HepG2 (cell line): ENCODE measurements at regions of chr6 and their contacts with region 1.

Region 1: DNA sequence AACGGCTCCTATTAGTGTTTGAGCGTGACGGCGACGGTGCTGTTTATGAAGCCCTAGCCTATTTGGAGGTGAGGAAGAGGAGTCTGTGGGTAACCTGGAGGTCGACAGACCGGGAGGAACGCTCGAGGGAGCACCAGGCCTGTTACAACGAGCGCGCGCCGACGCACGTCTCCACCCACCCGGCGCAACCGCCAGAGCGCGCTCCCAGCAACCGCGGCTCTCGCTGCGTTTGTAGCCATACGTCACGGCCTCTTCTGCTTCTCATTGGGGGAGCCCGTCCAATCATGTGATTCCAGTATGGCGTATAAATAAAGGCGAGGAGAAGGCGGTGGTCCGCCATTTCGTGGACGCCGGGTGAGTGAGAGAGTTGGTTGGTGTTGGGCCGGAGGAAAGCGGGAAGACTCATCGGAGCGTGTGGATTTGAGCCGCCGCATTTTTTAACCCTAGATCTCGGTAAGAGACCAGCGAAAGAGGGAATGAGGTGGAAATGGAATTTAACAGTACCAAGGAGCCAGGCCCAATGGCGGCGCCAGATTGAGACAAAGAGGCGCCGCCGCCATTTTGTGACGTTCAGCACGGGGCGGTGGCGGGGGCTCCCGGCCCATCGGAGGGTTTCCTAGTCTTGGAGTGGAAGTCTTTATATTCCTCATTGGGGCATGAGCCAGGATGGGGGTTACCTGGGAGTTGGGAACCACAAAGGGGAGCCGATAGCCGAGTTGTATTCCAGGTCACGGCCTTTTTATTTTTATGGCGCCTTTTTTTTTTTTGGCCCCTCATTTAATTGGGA is at the start of gene SRSF3:
- DNase-seq: peak; percentile 98
- ATAC-seq: peak; percentile 92
- H3K4me3 ChIP-seq: peak within 1 kb of the TSS; percentile 87 to 97 (median 92)
- H3K27ac ChIP-seq: peak within 1 kb of the TSS; percentile 93
- H3K4me1 ChIP-seq: peaks cover 50% of the 10 kb centered on the region
- H3K27me3 ChIP-seq: no peaks in the 10 kb centered on the region; a peak in 1 of 5 replicates
- CTCF ChIP-seq: peak; percentile 82
- EP300 ChIP-seq: peak in 1 of 2 experiments; percentile 56; a peak in 3 of 4 replicates
- POLR2A ChIP-seq: peak; percentile 100
- RAD21 ChIP-seq: peak; percentile 64
- total RNA-seq, gene SRSF3: 684 and 1,115 TPM in 2 replicates

Region 2: DNA sequence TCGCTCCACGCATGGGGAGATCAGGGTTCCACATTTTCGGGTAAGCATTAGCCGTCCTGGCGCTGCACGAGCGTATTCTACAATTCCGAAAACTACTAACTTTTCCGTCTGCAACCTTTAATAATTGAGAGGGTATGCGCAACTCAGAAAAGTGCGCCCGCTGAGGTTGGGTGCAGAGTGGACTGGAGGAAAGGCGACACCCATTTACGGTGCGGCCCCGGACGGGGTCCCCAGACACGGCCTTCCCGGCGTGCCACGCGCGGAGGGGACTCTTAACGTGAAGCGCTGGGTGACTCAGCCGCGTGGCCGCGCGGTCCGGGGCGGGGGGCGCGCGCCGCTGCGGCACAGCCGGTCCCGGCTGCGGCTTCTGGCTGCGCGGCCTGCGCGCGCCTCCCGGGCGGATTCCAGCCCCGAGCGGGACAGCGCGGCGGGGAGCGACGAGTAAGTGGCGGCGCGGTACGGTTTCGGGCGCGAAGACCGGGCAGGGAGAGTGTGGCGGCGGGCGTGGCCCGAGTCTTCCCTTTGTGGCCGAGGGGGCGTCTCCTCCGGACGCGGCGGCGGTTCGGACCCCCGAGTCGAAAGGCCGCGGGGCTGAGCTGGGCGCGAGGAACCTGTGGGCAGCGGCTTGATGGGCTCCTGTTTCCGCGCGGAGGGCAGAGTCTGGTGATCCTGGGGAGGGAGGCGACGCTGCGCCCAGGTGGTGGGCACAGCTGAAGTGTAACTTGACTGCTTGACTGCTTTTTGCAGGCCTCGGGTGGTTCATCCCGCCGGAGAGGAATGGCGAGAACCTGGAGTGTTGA is 151.4 kb before region 1 on chr6 and contains the starts of genes KCTD20 and PXT1:
- CTCF ChIA-PET with region 1: no interaction called
- POLR2A ChIA-PET with region 1: interaction called, 4 read pairs
- in situ Hi-C with region 1: loop called (anchors 5 kb)
- intact Hi-C with region 1: loop called (anchors 2 kb)
- DNase-seq: peak; percentile 86
- ATAC-seq: peak; percentile 90
- H3K4me3 ChIP-seq: peak within 1 kb of the TSS; percentile 78 to 93 (median 93)
- H3K27ac ChIP-seq: peak within 1 kb of the TSS; percentile 94
- H3K4me1 ChIP-seq: peaks cover 51% of the 10 kb centered on the region
- H3K27me3 ChIP-seq: no peaks in the 10 kb centered on the region; a peak in 1 of 5 replicates
- CTCF ChIP-seq: peak; percentile 32
- EP300 ChIP-seq: peak; percentile 48 to 70; a peak in 2 of 4 replicates
- POLR2A ChIP-seq: peak; percentile 89 to 92
- RAD21 ChIP-seq: peak; percentile 66
- total RNA-seq, gene KCTD20: 67.1 and 103 TPM in 2 replicates
- total RNA-seq, gene PXT1: not detected in 2 replicates

Region 3: DNA sequence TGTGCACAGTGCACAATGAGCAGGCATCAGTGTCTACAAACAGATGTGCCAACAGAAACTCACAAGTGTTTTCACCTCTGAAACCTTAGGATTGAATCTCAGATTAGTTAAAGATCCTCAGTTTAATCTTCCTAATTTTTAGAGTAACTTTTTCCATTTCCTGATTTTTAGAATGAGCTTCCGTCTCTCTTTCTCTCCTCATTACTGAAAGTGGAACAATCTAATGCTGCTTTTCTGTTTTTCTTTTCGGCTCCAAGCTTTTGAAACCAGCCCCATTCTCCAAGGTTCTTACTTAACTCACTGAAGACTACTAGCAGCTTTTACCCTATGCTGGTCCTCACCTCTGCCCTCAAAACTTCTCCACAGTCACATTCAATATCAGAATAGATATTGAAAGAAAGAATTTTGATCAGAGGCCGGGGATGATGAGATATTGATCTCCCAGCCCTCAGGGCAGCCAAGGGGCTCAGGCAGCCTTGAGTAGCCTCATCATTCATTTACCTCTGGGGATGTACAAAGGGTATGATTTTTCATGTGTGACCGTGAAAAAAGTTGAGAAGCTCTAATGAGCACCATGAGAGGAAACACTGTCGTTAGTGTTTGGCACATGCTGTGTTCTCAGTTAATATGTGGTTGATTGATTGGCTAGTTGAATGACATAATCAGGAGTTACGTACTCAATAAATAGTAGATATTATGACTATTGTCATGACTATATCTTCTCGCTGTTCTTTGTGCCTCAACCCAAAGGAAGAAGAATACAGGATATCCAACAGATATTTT is 35.0 kb before region 1 on chr6:
- CTCF ChIA-PET with region 1: no interaction called
- POLR2A ChIA-PET with region 1: no interaction called
- in situ Hi-C with region 1: no loop called
- intact Hi-C with region 1: no loop called
- DNase-seq: no peak
- ATAC-seq: no peak
- H3K4me3 ChIP-seq: no peak overlapping the region
- H3K27ac ChIP-seq: no peak overlapping the region
- H3K4me1 ChIP-seq: peaks cover 30% of the 10 kb centered on the region
- H3K27me3 ChIP-seq: no peaks in the 10 kb centered on the region; a peak in 1 of 5 replicates
- CTCF ChIP-seq: no peak
- EP300 ChIP-seq: no peak
- POLR2A ChIP-seq: no peak
- RAD21 ChIP-seq: no peak

Region 4: GRCh38 chr6:36576561-36576960 is 17.7 kb before region 1 on chr6:
- CTCF ChIA-PET with region 1: interaction called, 3 read pairs
- POLR2A ChIA-PET with region 1: interaction called, 29 read pairs
- in situ Hi-C with region 1: no loop called
- intact Hi-C with region 1: loop called (anchors 2 kb)
- DNase-seq: no peak
- ATAC-seq: peak; percentile 25; the same call in 2 of the 3 replicates
- H3K4me3 ChIP-seq: no peak overlapping the region
- H3K27ac ChIP-seq: no peak overlapping the region
- H3K4me1 ChIP-seq: peaks cover 80% of the 10 kb centered on the region
- H3K27me3 ChIP-seq: no peaks in the 10 kb centered on the region
- CTCF ChIP-seq: no peak
- EP300 ChIP-seq: no peak
- POLR2A ChIP-seq: no peak
- RAD21 ChIP-seq: no peak

Region 5: DNA sequence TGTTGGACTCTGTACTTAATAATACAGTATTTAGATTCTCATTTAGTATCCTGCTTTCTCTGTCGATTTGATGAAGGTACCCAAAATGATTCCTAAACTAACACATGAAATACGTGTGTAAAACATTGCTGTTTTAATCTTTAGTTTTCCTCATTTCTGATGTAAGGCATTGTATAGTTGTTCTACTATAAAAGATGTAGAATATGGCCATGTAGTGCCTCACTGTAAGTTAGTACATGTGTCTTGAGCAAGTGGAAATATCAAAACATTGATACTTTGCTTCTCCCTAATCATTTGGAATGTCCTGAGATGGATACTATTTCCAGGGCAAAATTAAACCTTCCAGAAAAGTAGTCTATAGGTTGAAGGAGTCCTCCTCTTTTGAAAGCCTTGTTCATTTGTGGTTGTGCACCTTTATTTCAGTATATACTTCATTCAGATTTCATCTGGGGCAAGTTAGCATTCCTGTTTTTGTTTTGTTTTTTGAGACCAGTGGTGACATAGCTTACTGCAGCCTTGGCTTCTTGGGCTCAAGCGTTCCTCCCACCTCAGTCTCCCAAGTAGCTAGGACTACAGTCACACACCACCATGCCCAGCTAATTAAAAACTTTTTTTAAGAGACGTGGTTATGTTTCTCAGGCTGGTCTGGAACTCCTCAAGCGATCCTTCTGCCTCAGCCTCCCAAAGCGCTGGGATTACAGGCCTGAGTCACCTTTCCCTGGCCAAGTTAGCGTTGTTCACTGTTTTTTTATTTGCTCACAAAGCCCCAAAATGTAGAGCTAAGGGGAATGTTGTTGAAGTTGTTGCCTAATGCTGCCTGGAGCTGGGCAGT is 11.6 kb after region 1 on chr6:
- CTCF ChIA-PET with region 1: no interaction called
- POLR2A ChIA-PET with region 1: interaction called, 142 read pairs
- in situ Hi-C with region 1: no loop called
- intact Hi-C with region 1: no loop called
- DNase-seq: no peak
- ATAC-seq: no peak
- H3K4me3 ChIP-seq: no peak overlapping the region
- H3K27ac ChIP-seq: no peak overlapping the region
- H3K4me1 ChIP-seq: peaks cover 93% of the 10 kb centered on the region
- H3K27me3 ChIP-seq: no peaks in the 10 kb centered on the region
- CTCF ChIP-seq: no peak
- EP300 ChIP-seq: no peak
- POLR2A ChIP-seq: peak; percentile 23 to 66; a peak in 2 of 4 replicates
- RAD21 ChIP-seq: no peak